Sciatic nerve (tissue), 2 donors: ENCODE measurements at regions of chr2 and their contacts with region 1.

Region 1: GRCh38 chr2:79573895-79574674 is 61.2 kb downstream of the CTNNA2 start:
- DNase-seq: no peak
- ATAC-seq: no peak

Region 2: DNA sequence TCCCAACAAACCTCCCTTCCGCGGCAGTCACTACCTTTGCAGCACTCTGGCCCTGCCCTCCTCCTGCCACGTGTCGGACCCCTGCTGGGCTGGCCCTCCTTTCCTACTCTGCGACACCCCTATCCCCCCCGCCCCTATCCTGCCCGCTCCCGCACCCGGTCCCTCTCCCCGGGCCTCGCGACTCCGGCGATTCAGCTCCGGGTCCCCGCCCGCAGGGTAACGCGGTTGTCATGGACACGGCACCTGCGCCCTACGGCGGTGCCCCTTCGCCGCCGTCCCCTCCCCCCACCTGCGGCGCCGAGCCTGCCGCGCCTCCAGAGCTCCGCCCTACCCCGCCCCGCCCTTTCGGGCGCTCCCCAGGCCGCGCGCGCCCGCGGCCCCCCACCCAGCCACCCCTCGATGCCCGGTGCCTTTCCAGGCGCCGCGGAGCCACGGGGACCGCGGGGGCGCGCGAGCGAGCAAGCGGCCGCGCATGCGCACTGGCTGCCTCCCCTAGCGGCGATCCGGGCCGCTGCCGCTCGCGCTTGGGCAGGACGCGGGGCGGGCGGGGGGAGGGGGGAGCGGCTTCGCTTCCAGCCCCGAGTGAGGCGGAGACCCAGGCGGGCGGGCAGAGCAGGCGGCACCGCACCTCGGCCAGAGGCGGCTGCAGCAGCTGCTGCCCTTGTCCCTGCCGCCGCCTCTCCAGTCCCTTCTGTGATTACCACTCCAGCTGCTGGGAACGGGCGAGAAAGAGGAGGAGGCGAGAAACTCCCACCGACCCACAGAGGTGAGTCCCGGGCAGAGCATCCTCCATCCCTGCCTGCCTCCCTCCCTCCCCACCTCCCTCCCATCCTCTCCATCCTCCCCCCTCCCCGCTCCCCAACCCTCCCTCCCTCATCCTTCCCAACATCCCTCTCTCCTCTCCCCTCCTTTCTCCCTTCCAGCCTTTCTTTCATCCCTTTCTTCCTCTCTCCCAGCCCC is 61.4 kb before region 1 on chr2 and contains the start of gene CTNNA2:
- intact Hi-C with region 1: no loop called
- DNase-seq: no peak
- ATAC-seq: no peak
- total RNA-seq, gene CTNNA2: 5.4 TPM

Region 3: GRCh38 chr2:79552653-79553052 is 21.4 kb before region 1 on chr2:
- intact Hi-C with region 1: loop called (anchors 1 kb)
- DNase-seq: no peak
- ATAC-seq: no peak